Dendritic cell treated with granulocyte-macrophage colony-stimulating factor and Interleukin-4, amounts not matched to agents 40 ng/mL and 50 ng/mL, for 4 days (primary cell): ENCODE measurements at regions of chr7 and their contacts with region 1.

Region 1: DNA sequence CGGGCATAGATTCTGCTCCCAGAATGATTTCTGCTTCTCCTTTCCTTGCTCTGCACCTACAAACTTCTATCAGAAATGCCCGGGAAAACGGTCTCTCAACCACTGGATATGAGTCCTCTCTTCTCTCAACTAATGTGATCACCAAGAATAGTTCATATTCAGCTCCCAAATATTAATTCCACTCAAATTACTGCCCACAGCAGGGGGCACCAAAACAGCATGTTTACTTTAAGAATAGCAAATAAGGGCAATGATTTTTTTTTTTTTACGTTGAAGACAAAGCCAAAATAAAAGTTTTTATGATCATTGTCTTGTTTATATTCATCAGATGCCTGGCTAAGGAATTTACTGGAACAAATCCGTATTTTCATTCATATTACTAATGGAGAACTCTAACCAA is 94.9 kb upstream of the PRSS1 start:
- H3K4me3 Mint-ChIP-seq: no peak overlapping the region
- H3K27ac Mint-ChIP-seq: no peak overlapping the region
- H3K4me1 Mint-ChIP-seq: peaks cover 11% of the 10 kb centered on the region
- H3K27me3 Mint-ChIP-seq: peaks cover 9% of the 10 kb centered on the region

Region 2: GRCh38 chr7:142811154-142811737 is 156.8 kb after region 1 on chr7:
- intact Hi-C with region 1: loop called (anchors 5 kb)
- H3K4me3 Mint-ChIP-seq: no peak overlapping the region
- H3K27ac Mint-ChIP-seq: no peak overlapping the region
- H3K4me1 Mint-ChIP-seq: no peaks in the 10 kb centered on the region
- H3K27me3 Mint-ChIP-seq: peaks cover 31% of the 10 kb centered on the region